ENCODE measurements at regions of chr4 and their contacts with region 1.

Region 1: GRCh38 chr4:158729716-158730559 is 6.7 kb upstream of the PPID start:
- DNase-seq: peak; percentile 73 to 77
- H3K4me3 ChIP-seq: no peak overlapping the region
- H3K27ac ChIP-seq: no peak overlapping the region
- H3K4me1 ChIP-seq: no peaks in the 10 kb centered on the region
- H3K27me3 ChIP-seq: no peaks in the 10 kb centered on the region
- CTCF ChIP-seq: peak; percentile 74 to 99 (median 92)
- POLR2A ChIP-seq: no peak

Region 2: DNA sequence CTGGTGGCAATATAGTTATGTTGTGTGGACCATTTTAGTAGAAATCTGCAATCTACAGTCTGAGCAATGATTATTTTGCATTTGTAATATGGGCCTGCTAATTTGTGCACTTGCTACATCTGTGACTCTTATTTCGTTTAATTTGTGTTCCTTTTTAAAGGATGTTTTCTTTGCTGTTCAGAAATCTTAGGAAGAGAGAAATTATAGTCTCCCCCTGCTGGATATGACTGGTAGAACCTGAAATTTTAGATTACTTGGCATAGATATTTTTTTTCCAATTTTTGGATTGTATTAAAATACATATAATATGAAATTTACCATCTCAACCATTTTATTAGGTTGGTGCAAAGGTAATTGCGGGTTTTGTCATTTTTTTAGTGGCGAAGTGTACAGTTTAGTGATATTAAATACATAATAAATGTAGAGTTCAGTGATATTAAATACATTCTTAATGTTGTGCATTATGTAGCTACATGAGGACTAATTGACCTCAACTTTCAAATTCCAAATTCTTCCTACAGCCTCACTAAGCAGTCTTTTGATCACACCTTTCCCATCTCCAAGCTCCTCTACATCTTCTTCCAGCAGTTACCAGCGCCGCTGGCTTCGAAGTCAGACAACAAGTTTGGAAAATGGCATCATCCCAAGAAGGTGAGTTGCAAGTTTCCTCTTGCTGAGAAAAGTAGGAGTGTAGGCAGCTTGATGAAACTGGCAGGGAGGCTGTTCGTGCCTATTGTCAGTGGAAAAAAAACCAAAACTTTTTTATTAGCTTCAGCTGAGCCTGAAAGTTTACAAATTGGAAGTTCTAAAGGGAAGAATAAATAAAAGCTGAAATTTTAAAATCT is 121.1 kb after region 1 on chr4:
- intact Hi-C with region 1: loop called (anchors 2 kb)
- DNase-seq: no peak
- H3K4me3 ChIP-seq: no peak overlapping the region
- H3K27ac ChIP-seq: peak overlapping the region in 1 of 3 donors; percentile 1
- H3K4me1 ChIP-seq: peaks cover 0 to 5% of the 10 kb centered on the region in 2 donors
- H3K27me3 ChIP-seq: no peaks in the 10 kb centered on the region
- CTCF ChIP-seq: peak; percentile 33 to 86 (median 58)
- POLR2A ChIP-seq: no peak

Region 3: DNA sequence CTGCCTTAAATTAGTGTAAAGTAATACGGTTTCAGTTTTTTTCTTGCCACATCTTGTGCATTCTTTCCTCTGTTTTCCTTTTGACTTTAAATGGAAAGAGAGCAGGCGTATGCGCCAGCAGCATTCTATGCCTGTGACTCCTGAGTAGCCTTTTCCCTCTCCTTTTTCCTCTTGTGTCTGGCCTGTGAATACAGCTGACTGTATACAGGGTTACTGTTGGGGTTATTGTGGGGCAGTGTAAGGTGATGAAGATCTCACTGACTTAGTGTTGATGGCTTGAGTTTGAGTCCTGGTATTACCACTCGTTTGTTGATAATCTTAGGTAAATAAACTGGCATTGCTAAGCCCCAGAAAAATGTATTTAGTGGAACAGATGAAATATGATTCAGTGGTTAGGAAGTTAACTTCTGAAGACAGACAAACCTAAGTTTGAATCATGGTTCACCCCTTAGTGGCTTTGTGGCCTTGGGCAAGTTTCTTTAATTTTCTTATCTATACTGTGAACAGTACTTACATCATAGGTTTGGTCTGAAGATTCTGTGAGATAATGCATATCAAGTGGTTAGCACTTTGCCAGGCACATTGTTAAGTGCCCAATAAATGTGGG is 144.0 kb after region 1 on chr4:
- intact Hi-C with region 1: no loop called
- DNase-seq: no peak
- H3K4me3 ChIP-seq: no peak overlapping the region
- H3K27ac ChIP-seq: no peak overlapping the region
- H3K4me1 ChIP-seq: no peaks in the 10 kb centered on the region
- H3K27me3 ChIP-seq: no peaks in the 10 kb centered on the region
- CTCF ChIP-seq: no peak
- POLR2A ChIP-seq: no peak